PC-9 (cell line): ENCODE measurements at regions of chr6 and their contacts with region 1.

Region 1: GRCh38 chr6:87444362-87444761 is 28.4 kb upstream of the SLC35A1 start:
- DNase-seq: no peak
- H3K4me3 ChIP-seq: no peak overlapping the region
- H3K27ac ChIP-seq: no peak overlapping the region
- H3K4me1 ChIP-seq: no peaks in the 10 kb centered on the region
- H3K27me3 ChIP-seq: no peaks in the 10 kb centered on the region
- CTCF ChIP-seq: no peak

Region 2: GRCh38 chr6:87322304-87323212 is 121.8 kb before region 1 on chr6 and contains the start of gene SMIM8:
- CTCF ChIA-PET with region 1: no interaction called
- POLR2A ChIA-PET with region 1: no interaction called
- intact Hi-C with region 1: no loop called
- DNase-seq: peak; percentile 55 to 83
- H3K4me3 ChIP-seq: peak within 1 kb of the TSS; percentile 92
- H3K27ac ChIP-seq: no peak within 1 kb of the TSS
- H3K4me1 ChIP-seq: no peaks in the 10 kb centered on the region
- H3K27me3 ChIP-seq: no peaks in the 10 kb centered on the region
- CTCF ChIP-seq: peak; percentile 84
- total RNA-seq, gene SMIM8: 5.3 and 6.7 TPM in 2 replicates

Region 3: GRCh38 chr6:87494761-87495422 is 50.5 kb after region 1 on chr6:
- CTCF ChIA-PET with region 1: interaction called, 14 read pairs
- POLR2A ChIA-PET with region 1: no interaction called
- intact Hi-C with region 1: no loop called
- DNase-seq: no peak
- H3K4me3 ChIP-seq: no peak overlapping the region
- H3K27ac ChIP-seq: no peak overlapping the region
- H3K4me1 ChIP-seq: no peaks in the 10 kb centered on the region
- H3K27me3 ChIP-seq: no peaks in the 10 kb centered on the region
- CTCF ChIP-seq: no peak

Region 4: GRCh38 chr6:87887266-87887665 is 442.9 kb after region 1 on chr6:
- CTCF ChIA-PET with region 1: no interaction called
- POLR2A ChIA-PET with region 1: no interaction called
- intact Hi-C with region 1: no loop called
- DNase-seq: no peak
- H3K4me3 ChIP-seq: no peak overlapping the region
- H3K27ac ChIP-seq: no peak overlapping the region
- H3K4me1 ChIP-seq: no peaks in the 10 kb centered on the region
- H3K27me3 ChIP-seq: no peaks in the 10 kb centered on the region
- CTCF ChIP-seq: no peak

Region 5: DNA sequence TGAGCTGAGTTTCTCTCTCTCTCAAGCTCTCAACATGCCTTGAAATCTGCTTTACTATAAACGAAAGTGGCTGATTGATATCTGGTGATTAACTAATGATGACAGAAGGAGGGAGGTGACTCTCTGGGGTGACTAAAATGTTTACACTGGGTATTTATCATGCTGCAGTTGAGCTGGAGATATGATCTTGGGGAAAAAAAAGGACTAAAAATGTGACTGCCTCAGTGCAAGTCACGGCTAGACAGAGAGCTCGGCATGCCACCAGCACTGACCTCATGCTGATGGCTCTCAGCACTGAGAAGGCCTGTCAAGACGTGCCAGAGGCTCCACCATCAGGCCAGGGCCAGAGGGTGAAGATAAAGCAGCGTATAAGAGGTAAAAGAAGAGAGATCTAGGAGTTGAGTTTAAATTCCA is 500.2 kb after region 1 on chr6:
- CTCF ChIA-PET with region 1: no interaction called
- POLR2A ChIA-PET with region 1: no interaction called
- intact Hi-C with region 1: no loop called
- DNase-seq: peak; percentile 55 to 84
- H3K4me3 ChIP-seq: no peak overlapping the region
- H3K27ac ChIP-seq: peak overlapping the region; percentile 25
- H3K4me1 ChIP-seq: peaks cover 4% of the 10 kb centered on the region; the same call in 1 of the 2 replicates
- H3K27me3 ChIP-seq: no peaks in the 10 kb centered on the region
- CTCF ChIP-seq: no peak; the same call in 1 of the 2 replicates